Naive thymus-derived CD8-positive, alpha-beta T cell (primary cell): ENCODE measurements at regions of chr3 and their contacts with region 1.

Region 1: DNA sequence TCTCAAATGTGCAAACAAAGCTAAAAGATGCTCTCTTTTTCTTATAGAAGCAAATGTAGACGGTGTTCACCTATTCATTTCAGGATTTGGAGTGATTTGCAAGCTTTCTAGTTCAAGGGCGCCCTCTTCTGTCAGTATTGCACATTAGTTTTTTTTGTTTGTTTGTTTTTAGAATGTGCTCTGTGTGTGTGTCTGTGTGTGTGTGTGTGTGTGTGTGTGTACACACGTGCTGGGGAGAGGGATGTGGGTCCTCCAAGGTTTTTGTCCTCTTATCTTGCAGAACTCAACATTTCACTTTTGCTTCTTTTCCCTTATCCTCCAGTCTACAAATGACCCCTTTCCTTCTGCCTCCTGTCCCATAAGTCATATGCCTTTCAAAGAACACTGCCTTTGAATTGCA is 23.5 kb downstream of the DNAH1 start:
- DNase-seq: peak in 9 of 10 donors; percentile 33 to 84 (median 61)
- ATAC-seq: peak; percentile 71 to 75
- H3K4me3 Mint-ChIP-seq: no peak overlapping the region
- H3K27ac Mint-ChIP-seq: peak overlapping the region in 7 of 10 donors; percentile 23 to 70 (median 56)
- H3K4me1 Mint-ChIP-seq: peaks cover 4 to 24% (median 14%) of the 10 kb centered on the region in 4 donors
- H3K27me3 Mint-ChIP-seq: no peaks in the 10 kb centered on the region

Region 2: DNA sequence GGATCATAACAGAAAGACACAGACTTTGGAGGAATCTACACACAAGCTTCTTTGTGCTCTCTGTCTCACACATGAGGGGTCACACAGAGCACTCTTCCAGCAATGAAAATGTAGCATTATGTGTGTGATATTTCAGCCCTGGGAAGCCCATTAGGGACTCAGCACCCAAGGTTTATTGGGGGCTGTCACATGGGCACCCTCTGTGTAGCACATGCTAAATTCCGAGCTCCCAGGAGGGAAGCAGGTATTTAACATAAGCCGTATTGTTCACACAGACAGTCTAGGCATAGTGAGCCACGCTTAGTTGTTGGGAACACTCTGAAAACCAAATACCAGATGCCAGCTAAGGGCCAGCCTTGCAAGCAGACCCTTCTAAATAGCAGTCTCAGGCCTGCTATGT is 1216.1 kb before region 1 on chr3:
- POLR2A ChIA-PET with region 1: no interaction called
- DNase-seq: no peak
- ATAC-seq: no peak
- H3K4me3 Mint-ChIP-seq: no peak overlapping the region
- H3K27ac Mint-ChIP-seq: no peak overlapping the region
- H3K4me1 Mint-ChIP-seq: no peaks in the 10 kb centered on the region
- H3K27me3 Mint-ChIP-seq: peaks cover 0 to 1% (median 0%) of the 10 kb centered on the region in 5 donors

Region 3: GRCh38 chr3:52220380-52221026 is 119.1 kb before region 1 on chr3:
- POLR2A ChIA-PET with region 1: interaction called, 22 read pairs
- DNase-seq: peak; percentile 74 to 92 (median 87)
- ATAC-seq: peak; percentile 64 to 73
- H3K4me3 Mint-ChIP-seq: peak overlapping the region; percentile 32 to 89 (median 73)
- H3K27ac Mint-ChIP-seq: peak overlapping the region; percentile 75 to 92 (median 84)
- H3K4me1 Mint-ChIP-seq: peaks cover 41 to 96% (median 90%) of the 10 kb centered on the region in 4 donors
- H3K27me3 Mint-ChIP-seq: no peaks in the 10 kb centered on the region

Region 4: DNA sequence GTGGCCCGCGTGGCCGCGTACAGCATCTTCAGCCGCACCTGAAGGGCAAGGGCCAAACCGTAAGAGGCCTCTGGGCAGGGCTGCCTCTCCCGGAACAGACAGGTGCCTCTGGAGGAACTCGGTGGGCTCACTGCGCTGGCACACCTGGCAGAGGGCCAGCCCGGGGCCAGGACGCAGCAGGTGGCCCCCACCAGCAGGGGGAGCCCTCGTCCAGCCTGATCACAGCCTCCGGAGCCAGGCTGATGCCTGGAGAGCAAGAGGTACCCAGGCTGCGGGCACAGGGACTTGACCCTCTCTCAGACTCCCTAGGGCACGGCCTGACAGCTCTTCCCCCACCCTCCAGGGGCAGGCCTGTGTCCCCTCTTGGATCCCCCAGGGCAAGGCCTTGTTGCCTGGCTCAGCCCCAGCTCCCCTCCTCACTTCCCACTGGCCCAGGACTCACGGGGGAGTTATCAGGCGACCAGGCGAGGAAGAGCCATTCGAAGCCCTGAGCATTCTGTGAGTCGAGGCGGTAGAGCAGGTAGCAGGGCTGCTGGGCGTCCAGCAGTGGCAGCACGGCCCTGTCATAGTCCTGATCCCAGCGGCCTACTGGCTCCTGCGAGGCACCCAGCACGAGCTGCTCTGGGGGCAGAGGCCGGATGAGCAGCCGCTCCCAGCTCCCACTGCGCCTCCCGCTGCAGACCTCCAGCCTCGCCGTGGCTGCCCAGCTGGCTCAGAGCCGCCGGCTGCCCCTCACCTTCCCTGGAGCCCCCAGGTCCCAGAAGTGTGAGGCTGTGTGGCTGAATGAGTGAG is 107.9 kb before region 1 on chr3:
- POLR2A ChIA-PET with region 1: interaction called, 31 read pairs
- DNase-seq: peak; percentile 81 to 99 (median 90)
- ATAC-seq: peak; percentile 83 to 87
- H3K4me3 Mint-ChIP-seq: peak overlapping the region; percentile 39 to 83 (median 62)
- H3K27ac Mint-ChIP-seq: peak overlapping the region; percentile 40 to 95 (median 92)
- H3K4me1 Mint-ChIP-seq: peaks cover 25 to 75% (median 57%) of the 10 kb centered on the region in 4 donors
- H3K27me3 Mint-ChIP-seq: no peaks in the 10 kb centered on the region